Activated CD4-positive, alpha-beta memory T cell treated with anti-CD3 and anti-CD28 coated beads, Interleukin-2, amount 10 ng/mL, durations not matched to agents 7 days and 5 days (primary cell): ENCODE measurements at regions of chr12 and their contacts with region 1.

Region 1: GRCh38 chr12:12486661-12487240 is 75.9 kb downstream of the DUSP16 start:
- DNase-seq: no peak
- H3K4me3 Mint-ChIP-seq: no peak overlapping the region
- H3K27ac Mint-ChIP-seq: peak overlapping the region; percentile 77
- H3K4me1 Mint-ChIP-seq: peaks cover 66% of the 10 kb centered on the region
- H3K27me3 Mint-ChIP-seq: no peaks in the 10 kb centered on the region

Region 2: GRCh38 chr12:12442548-12443071 is 44.1 kb before region 1 on chr12:
- CTCF ChIA-PET with region 1: interaction called, 7 read pairs
- POLR2A ChIA-PET with region 1: interaction called, 83 read pairs
- DNase-seq: no peak
- H3K4me3 Mint-ChIP-seq: peak overlapping the region; percentile 39
- H3K27ac Mint-ChIP-seq: peak overlapping the region; percentile 98
- H3K4me1 Mint-ChIP-seq: peaks cover 91% of the 10 kb centered on the region
- H3K27me3 Mint-ChIP-seq: no peaks in the 10 kb centered on the region

Region 3: DNA sequence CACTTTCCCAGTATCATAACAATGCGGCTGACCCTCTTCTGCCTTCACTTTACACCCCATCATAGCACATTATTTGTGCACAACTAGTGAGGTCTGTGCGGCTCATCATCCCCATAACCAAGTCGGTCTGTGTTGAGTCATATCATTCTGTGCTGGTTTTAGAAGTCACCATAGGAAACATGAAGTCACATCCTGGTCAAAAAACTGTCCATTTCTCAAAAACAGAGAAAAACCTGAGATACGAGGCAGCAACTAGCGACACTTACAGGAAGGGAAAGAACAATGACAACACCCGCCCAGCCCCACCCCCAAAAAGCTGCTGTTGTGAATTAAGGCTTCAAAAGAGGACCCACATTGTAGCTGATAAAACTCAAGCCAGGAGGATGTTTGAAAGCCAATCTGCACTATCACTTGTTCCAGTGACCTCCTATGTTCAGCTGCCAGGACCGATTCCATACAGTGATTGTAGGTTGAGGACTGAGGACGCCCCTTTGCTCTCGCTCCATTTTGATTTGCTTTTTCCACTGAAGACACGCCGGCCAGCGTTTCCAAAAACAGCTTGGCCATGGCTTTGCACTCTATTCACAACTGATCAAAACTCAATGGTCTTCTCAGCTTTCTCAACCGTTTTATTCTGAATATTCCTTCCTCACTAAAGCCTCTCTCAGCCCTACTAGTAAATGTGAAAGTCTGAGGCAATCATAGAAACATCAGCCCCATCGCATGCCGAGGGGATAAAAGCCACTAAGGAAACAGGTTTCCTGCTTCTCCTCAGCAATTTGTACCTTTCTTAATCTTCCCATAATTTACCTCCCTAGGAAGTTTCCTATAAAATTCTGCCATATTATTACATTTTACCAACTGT is 11.6 kb before region 1 on chr12:
- CTCF ChIA-PET with region 1: interaction called, 11 read pairs
- POLR2A ChIA-PET with region 1: interaction called, 112 read pairs
- DNase-seq: peak; percentile 74
- H3K4me3 Mint-ChIP-seq: peak overlapping the region; percentile 67
- H3K27ac Mint-ChIP-seq: peak overlapping the region; percentile 100
- H3K4me1 Mint-ChIP-seq: peaks cover 86% of the 10 kb centered on the region
- H3K27me3 Mint-ChIP-seq: no peaks in the 10 kb centered on the region

Region 4: GRCh38 chr12:12527820-12528296 is 41.1 kb after region 1 on chr12:
- CTCF ChIA-PET with region 1: no interaction called
- POLR2A ChIA-PET with region 1: interaction called, 11 read pairs
- DNase-seq: peak; percentile 24
- H3K4me3 Mint-ChIP-seq: no peak overlapping the region
- H3K27ac Mint-ChIP-seq: peak overlapping the region; percentile 74
- H3K4me1 Mint-ChIP-seq: peaks cover 38% of the 10 kb centered on the region
- H3K27me3 Mint-ChIP-seq: no peaks in the 10 kb centered on the region

Region 5: DNA sequence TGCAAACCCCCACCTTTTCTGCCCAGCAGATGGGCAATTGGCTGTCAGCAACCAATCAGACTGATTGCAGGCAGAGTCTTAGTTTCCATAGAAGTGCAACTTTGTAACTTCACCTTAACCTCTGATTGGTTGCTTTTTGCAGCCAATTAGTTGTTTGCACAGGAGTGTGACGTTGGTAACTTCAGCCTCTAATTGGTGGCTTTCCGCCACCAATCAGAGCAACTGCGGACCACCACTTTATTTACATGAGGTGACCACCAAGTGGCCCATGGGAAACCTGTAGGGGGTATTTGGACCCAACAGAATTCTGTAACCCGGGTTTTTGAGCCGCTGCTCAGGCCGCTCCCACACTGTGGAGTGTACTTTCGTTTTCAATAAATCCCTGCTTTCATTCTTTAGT is 262.7 kb after region 1 on chr12:
- CTCF ChIA-PET with region 1: no interaction called
- POLR2A ChIA-PET with region 1: no interaction called
- DNase-seq: no peak
- H3K4me3 Mint-ChIP-seq: no peak overlapping the region
- H3K27ac Mint-ChIP-seq: no peak overlapping the region
- H3K4me1 Mint-ChIP-seq: peaks cover 6% of the 10 kb centered on the region
- H3K27me3 Mint-ChIP-seq: no peaks in the 10 kb centered on the region